ENCODE measurements at regions of chr17 and their contacts with region 1.

Region 1: DNA sequence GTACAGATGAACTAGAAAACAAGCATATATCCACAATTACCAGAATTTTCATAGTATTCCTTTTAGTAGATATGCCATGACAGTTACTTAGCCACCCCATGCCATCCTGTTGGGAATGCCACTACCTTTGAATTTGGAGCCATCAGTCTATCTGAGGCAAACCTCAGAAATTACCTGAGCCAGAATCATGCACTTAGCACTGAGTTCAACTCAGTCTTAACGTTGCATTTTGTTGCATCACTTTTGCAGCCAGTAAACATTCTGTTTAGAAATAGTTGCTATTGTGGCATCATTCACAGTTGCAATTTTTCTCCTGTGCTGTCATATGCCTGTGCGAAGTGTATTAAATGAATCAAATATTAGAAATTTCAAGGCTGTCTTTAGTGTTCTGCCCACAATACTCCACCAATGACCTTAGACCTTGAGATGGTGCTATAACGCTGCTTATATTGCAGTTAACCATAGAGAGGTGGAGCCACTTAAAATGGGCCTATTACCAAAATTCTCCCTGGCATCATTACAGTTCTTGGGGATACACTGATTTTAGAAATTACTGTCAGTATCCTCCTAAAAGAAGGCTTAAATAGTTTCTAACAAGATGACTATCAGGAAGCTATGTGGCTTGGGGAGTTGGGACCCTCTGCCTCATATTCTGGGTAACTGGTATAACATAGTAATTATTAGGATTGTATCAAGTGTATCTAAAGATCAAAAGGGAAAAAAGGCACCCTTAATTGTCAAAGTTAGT is 11.1 kb downstream of the PTRH2 start:
- DNase-seq: no peak

Region 2: GRCh38 chr17:59565171-59565969 is 130.7 kb before region 1 on chr17 and contains the start of gene DHX40:
- CTCF ChIA-PET with region 1: no interaction called
- POLR2A ChIA-PET with region 1: no interaction called
- DNase-seq: peak; percentile 98

Region 3: DNA sequence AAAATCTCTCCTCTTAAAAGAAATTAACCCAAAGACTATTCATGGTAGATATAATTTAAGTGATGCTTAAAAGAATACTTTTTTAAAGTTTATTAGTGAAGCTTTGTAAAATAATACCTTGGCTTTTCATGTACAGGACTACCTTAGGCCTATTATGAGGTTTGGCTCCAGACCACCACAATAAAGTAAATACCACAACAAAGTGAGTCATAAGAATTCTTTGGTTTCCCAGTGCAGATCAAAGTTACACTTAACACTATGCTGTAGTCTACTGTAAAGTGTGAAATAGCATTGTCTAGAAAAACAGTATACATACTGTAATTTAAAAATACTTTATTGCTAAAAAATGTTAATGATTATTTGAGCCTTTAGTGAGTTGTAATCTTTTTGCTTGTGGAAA is 44.8 kb before region 1 on chr17:
- CTCF ChIA-PET with region 1: interaction called, 10 read pairs
- POLR2A ChIA-PET with region 1: no interaction called
- DNase-seq: no peak

Region 4: DNA sequence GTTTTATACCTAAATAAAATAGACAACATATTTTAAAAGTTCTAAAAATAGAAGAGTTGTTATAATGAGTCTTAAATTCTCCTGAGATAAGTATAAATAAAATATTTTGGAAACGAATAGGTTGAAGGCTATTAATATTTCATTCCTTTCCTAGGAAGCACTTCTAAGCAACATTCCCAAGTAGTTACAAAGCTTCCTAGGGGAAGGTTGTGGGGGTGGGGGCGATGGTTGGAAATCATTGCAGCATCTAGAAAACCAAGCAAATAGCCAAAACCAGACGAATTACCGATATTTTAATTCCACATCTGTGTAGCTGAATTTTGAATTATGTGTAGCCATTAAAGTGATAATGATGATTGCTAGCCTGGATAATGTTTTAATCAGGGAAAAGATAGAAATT is 15.8 kb before region 1 on chr17:
- CTCF ChIA-PET with region 1: no interaction called
- POLR2A ChIA-PET with region 1: no interaction called
- DNase-seq: no peak

Measured in HEK293T (cell line).